ENCODE measurements at regions of chr1 and their contacts with region 1.

Region 1: DNA sequence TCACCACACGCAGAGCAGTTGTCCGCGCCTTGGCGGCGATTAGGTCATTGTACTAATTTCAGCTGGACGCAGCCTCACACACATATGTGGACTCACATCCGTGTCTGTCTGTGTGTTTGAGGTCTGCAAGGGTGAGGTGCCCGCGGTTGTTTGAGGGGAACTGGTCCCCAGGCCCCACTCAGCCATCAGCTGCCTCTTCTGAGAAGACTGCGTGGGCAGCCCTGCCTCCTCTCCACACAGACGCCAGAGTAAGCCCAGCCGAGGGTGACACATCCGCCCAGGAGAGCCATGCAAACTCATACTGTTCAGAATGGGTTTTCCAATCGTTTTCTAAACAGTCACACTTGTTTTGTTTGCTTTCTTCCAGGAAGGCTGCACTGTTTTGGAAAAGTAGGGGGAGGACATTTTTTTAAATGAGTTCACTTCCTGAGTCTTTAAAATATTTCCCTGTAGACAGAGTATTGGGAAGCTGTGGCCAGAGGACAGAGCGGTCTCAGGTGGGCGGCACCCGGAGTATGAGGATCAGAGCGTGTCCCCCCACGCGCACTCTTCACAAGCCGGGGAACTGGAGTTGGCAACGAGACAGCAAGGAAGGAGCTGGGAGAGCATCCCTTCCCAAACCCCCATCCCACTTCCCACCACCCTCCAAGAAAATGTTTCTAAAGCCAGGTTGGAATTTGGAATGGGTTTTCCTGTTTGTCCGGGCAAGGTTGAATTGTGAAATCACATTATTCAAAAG is 53.3 kb downstream of the TOMM20 start:
- DNase-seq: peak; percentile 98
- ATAC-seq: peak; percentile 77
- H3K4me3 ChIP-seq: peak overlapping the region; percentile 37
- H3K27ac ChIP-seq: peak overlapping the region; percentile 99
- H3K4me1 ChIP-seq: peaks cover 70% of the 10 kb centered on the region
- H3K27me3 ChIP-seq: no peaks in the 10 kb centered on the region
- CTCF ChIP-seq: no peak
- EP300 ChIP-seq: peak; percentile 99 to 100; a peak in 3 of 4 replicates
- POLR2A ChIP-seq: peak; percentile 74
- RAD21 ChIP-seq: no peak

Region 2: GRCh38 chr1:234309598-234310459 is 765.5 kb before region 1 on chr1:
- CTCF ChIA-PET with region 1: no interaction called
- POLR2A ChIA-PET with region 1: no interaction called
- RAD21 ChIA-PET with region 1: no interaction called
- SMC1A ChIA-PET with region 1: no interaction called
- in situ Hi-C with region 1: no loop called
- intact Hi-C with region 1: no loop called
- DNase-seq: no peak
- ATAC-seq: peak; percentile 93
- H3K4me3 ChIP-seq: no peak overlapping the region
- H3K27ac ChIP-seq: no peak overlapping the region
- H3K4me1 ChIP-seq: peaks cover 10% of the 10 kb centered on the region
- H3K27me3 ChIP-seq: no peaks in the 10 kb centered on the region; a peak in 1 of 4 replicates
- CTCF ChIP-seq: peak; percentile 88 to 93 (median 91)
- EP300 ChIP-seq: no peak
- POLR2A ChIP-seq: no peak
- RAD21 ChIP-seq: peak; percentile 80

Region 3: GRCh38 chr1:234730770-234731568 is 344.4 kb before region 1 on chr1:
- CTCF ChIA-PET with region 1: no interaction called
- POLR2A ChIA-PET with region 1: interaction called, 4 read pairs
- RAD21 ChIA-PET with region 1: no interaction called
- SMC1A ChIA-PET with region 1: interaction called, 3 read pairs
- in situ Hi-C with region 1: loop called (anchors 10 kb)
- intact Hi-C with region 1: no loop called
- DNase-seq: peak; percentile 68
- ATAC-seq: peak; percentile 80
- H3K4me3 ChIP-seq: peak overlapping the region; percentile 17; the same call in 1 of the 2 replicates
- H3K27ac ChIP-seq: peak overlapping the region; percentile 82
- H3K4me1 ChIP-seq: peaks cover 59% of the 10 kb centered on the region
- H3K27me3 ChIP-seq: no peaks in the 10 kb centered on the region
- CTCF ChIP-seq: peak; percentile 17 to 30 (median 28); a peak in 3 of 6 replicates
- EP300 ChIP-seq: peak; percentile 53 to 57; a peak in 3 of 4 replicates
- POLR2A ChIP-seq: no peak
- RAD21 ChIP-seq: peak; percentile 46; the same call in 1 of the 2 replicates

Region 4: GRCh38 chr1:234881893-234882771 is 193.2 kb before region 1 on chr1:
- CTCF ChIA-PET with region 1: no interaction called
- POLR2A ChIA-PET with region 1: no interaction called
- RAD21 ChIA-PET with region 1: interaction called, 5 read pairs
- SMC1A ChIA-PET with region 1: interaction called, 7 read pairs
- in situ Hi-C with region 1: no loop called
- intact Hi-C with region 1: loop called (anchors 2 kb)
- DNase-seq: peak; percentile 83
- ATAC-seq: peak; percentile 88
- H3K4me3 ChIP-seq: peak overlapping the region; percentile 53
- H3K27ac ChIP-seq: peak overlapping the region; percentile 73
- H3K4me1 ChIP-seq: peaks cover 50% of the 10 kb centered on the region
- H3K27me3 ChIP-seq: no peaks in the 10 kb centered on the region
- CTCF ChIP-seq: no peak
- EP300 ChIP-seq: peak; percentile 90 to 94
- POLR2A ChIP-seq: no peak
- RAD21 ChIP-seq: no peak

Region 5: DNA sequence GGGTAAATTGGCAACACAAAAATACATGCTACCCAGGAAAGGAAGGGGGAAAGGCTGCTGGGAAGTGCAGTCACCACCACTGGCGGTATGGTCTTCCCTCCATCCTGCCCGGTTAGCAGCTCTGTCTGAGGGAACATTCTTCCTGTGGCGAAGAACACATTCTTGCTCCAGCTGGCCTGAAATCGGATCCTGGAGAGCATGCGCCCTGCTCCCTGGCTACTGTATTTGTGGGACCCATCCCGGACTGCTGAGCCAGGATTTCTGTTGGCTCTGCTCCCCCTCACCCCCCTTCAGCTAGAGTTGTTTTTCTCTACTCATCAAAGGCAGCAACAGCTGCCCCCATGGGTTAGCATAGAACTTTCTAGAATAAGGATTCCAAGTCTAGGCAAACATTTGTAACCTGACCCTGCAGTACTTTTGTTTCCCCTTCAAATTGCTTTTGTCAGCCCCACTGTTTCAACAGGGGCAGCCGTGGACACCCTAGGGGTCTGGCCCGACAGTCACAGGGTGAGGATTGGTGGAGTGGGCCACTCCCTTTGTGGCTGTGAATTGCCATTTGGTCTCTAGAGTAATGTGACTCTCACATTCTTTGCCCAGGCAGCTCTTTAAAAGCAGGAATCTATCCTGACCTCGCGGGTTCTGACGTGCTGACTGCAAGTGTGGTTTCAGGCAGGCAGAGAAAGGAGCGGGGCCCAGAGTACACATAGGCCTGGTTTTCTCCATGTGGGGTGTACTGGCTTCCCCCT is 104.5 kb before region 1 on chr1:
- CTCF ChIA-PET with region 1: no interaction called
- POLR2A ChIA-PET with region 1: interaction called, 5 read pairs
- RAD21 ChIA-PET with region 1: interaction called, 85 read pairs
- SMC1A ChIA-PET with region 1: interaction called, 174 read pairs
- in situ Hi-C with region 1: loop called (anchors 5 kb)
- intact Hi-C with region 1: loop called (anchors 2 kb)
- DNase-seq: no peak
- ATAC-seq: peak; percentile 72
- H3K4me3 ChIP-seq: no peak overlapping the region
- H3K27ac ChIP-seq: peak overlapping the region; percentile 95
- H3K4me1 ChIP-seq: peaks cover 60% of the 10 kb centered on the region
- H3K27me3 ChIP-seq: no peaks in the 10 kb centered on the region
- CTCF ChIP-seq: no peak
- EP300 ChIP-seq: peak in 1 of 2 experiments; percentile 87; a peak in 2 of 4 replicates
- POLR2A ChIP-seq: peak; percentile 31; the same call in 1 of the 2 replicates
- RAD21 ChIP-seq: 0 out of 2 replicates have a peak, but pooled peaks have one; percentile 4

Region 6: DNA sequence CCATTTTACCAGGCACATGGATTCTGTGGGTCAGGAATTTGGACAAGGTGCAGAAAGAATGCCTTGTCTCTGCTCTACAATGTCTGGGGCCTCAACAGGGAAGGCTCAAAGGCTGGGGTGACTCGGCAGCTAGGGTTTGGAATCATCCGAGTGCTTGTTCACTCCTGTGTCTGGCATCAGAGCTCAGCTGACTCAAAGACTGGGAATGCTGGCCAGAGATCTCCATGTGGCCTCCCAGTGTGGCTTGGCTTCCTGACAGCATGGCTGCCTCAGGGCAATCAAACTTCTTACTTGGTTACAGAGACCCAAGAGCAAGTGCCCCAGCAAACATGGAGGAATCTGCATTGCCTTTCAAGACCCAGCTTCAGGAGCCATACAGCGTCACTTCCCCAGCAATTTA is 57.2 kb before region 1 on chr1:
- CTCF ChIA-PET with region 1: interaction called, 6 read pairs
- POLR2A ChIA-PET with region 1: interaction called, 17 read pairs
- RAD21 ChIA-PET with region 1: interaction called, 38 read pairs
- SMC1A ChIA-PET with region 1: interaction called, 47 read pairs
- in situ Hi-C with region 1: loop called (anchors 5 kb)
- intact Hi-C with region 1: loop called (anchors 1 kb)
- DNase-seq: no peak
- ATAC-seq: no peak
- H3K4me3 ChIP-seq: no peak overlapping the region
- H3K27ac ChIP-seq: peak overlapping the region; percentile 24; the same call in 1 of the 2 replicates
- H3K4me1 ChIP-seq: peaks cover 63% of the 10 kb centered on the region
- H3K27me3 ChIP-seq: no peaks in the 10 kb centered on the region
- CTCF ChIP-seq: no peak
- EP300 ChIP-seq: no peak
- POLR2A ChIP-seq: no peak
- RAD21 ChIP-seq: no peak

Region 7: GRCh38 chr1:235045034-235045720 is 30.2 kb before region 1 on chr1:
- CTCF ChIA-PET with region 1: interaction called, 5 read pairs
- POLR2A ChIA-PET with region 1: interaction called, 5 read pairs
- RAD21 ChIA-PET with region 1: interaction called, 31 read pairs
- SMC1A ChIA-PET with region 1: interaction called, 71 read pairs
- in situ Hi-C with region 1: no loop called
- intact Hi-C with region 1: loop called (anchors 1 kb)
- DNase-seq: no peak
- ATAC-seq: no peak
- H3K4me3 ChIP-seq: no peak overlapping the region
- H3K27ac ChIP-seq: peak overlapping the region; percentile 40; the same call in 1 of the 2 replicates
- H3K4me1 ChIP-seq: peaks cover 42% of the 10 kb centered on the region
- H3K27me3 ChIP-seq: no peaks in the 10 kb centered on the region
- CTCF ChIP-seq: no peak
- EP300 ChIP-seq: no peak
- POLR2A ChIP-seq: no peak
- RAD21 ChIP-seq: no peak

Measured in GM12878 (cell line).